ENCODE measurements at regions of chr18 and their contacts with region 1.

Region 1: DNA sequence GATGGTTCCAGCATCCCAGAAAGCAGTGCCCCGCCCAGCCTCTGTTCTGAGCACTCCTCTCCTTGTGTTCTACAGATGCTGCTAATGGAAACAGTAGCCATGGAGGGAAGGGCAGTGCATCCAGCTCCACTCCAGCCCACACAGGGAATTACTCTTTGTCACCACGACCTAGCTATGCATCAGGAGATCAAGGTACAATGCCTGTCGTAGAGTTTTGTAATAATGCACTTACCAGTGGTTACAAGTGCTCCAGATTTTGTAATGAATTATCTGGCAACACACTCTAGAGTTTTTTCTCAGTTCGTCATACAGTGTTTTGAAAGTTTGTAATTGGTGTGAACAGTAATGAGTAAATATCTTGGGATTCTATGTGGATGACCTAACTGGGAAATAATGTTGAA is 161.1 kb downstream of the ESCO1 start:
- DNase-seq: peak; percentile 84
- H3K4me3 Mint-ChIP-seq: no peak overlapping the region
- H3K27ac Mint-ChIP-seq: peak overlapping the region; percentile 87
- H3K4me1 Mint-ChIP-seq: peaks cover 20% of the 10 kb centered on the region
- H3K27me3 Mint-ChIP-seq: no peaks in the 10 kb centered on the region
- CTCF ChIP-seq: no peak

Region 2: GRCh38 chr18:21391074-21391673 is 48.3 kb before region 1 on chr18:
- CTCF ChIA-PET with region 1: interaction called, 7 read pairs
- POLR2A ChIA-PET with region 1: interaction called, 7 read pairs
- intact Hi-C with region 1: loop called (anchors 1 kb)
- DNase-seq: peak; percentile 84
- H3K4me3 Mint-ChIP-seq: peak overlapping the region; percentile 23
- H3K27ac Mint-ChIP-seq: peak overlapping the region; percentile 51
- H3K4me1 Mint-ChIP-seq: peaks cover 16% of the 10 kb centered on the region
- H3K27me3 Mint-ChIP-seq: no peaks in the 10 kb centered on the region
- CTCF ChIP-seq: no peak

Region 3: DNA sequence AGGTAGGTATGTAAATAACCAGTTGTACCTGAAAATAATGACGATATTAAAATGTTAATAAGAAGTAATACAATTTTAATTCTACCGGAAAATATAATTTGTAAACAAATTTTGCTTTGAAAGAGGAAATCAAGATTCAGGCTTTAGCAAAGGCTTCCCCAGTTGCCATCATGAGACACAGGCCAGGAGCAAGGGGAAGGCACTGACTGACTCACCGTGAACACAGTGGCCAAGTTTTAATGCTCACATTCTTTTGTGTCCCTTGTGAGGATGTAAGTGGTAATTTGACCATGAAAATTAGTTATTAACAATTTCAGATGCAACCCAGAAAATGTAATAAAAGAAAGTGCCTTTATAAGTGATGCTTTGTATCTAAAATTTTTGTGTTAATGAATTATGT is 33.3 kb before region 1 on chr18:
- CTCF ChIA-PET with region 1: no interaction called
- POLR2A ChIA-PET with region 1: no interaction called
- intact Hi-C with region 1: no loop called
- DNase-seq: peak; percentile 15
- H3K4me3 Mint-ChIP-seq: no peak overlapping the region
- H3K27ac Mint-ChIP-seq: no peak overlapping the region
- H3K4me1 Mint-ChIP-seq: no peaks in the 10 kb centered on the region
- H3K27me3 Mint-ChIP-seq: no peaks in the 10 kb centered on the region
- CTCF ChIP-seq: no peak